ENCODE measurements at regions of chr1 and their contacts with region 1.

Region 1: GRCh38 chr1:11012250-11013171 is at the start of gene TARDBP:
- DNase-seq: peak; percentile 82 to 95 (median 90)
- ATAC-seq: peak; percentile 87
- H3K4me3 ChIP-seq: peak within 1 kb of the TSS; percentile 78 to 94
- H3K4me3 Mint-ChIP-seq: peak within 1 kb of the TSS; percentile 92
- H3K27ac ChIP-seq: peak within 1 kb of the TSS; percentile 95 to 97
- H3K27ac Mint-ChIP-seq: peak within 1 kb of the TSS; percentile 97
- H3K4me1 ChIP-seq: peaks cover 38% of the 10 kb centered on the region
- H3K4me1 Mint-ChIP-seq: peaks cover 36% of the 10 kb centered on the region
- H3K27me3 ChIP-seq: no peaks in the 10 kb centered on the region
- H3K27me3 Mint-ChIP-seq: no peaks in the 10 kb centered on the region
- CTCF ChIP-seq: no peak
- total RNA-seq, gene TARDBP: 125 to 131 TPM

Region 2: DNA sequence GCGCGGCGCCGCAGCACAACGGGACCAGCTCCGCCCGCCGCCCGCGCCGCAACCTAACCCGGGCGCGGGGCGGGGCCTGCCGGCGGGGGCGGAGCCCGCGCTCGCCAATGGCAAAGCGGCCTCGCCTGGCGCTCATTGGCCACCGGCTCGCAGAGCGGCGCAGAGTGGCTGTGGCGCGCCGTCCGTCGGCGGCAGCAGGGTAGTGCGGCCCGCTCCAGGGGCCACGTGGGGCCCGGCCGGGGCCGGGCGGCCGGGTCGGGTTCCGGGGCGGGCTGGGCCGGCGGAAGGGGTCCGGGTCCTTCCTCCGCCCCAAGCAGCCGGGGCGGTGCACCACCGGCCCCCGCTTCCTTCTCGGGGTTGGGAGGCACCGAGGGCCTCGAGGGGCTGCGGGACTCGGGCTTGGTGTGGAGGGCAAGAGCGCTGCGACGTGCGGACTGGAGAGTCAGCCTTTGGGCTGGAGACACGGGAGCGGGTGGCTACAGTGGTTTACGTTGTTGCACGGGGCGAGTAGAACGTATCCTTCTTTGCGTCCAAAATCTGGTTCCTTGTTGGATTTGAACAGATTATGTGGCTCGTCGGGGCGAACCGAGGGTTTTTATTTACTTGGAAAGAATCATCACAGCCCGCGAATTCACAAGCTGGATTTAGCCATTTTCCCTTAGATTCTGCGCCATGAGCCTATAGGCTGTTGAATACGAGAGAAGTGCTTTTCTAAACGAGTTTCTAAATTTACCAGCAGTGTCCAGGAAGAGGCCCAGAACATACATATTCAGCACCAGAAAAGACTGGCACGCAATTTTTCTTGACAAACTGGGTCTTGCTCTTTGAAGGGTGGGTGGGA is 47.7 kb after region 1 on chr1 and contains the start of gene SRM:
- CTCF ChIA-PET with region 1: no interaction called
- POLR2A ChIA-PET with region 1: interaction called, 10 read pairs
- intact Hi-C with region 1: loop called (anchors 1 kb)
- DNase-seq: peak; percentile 80 to 95 (median 89)
- ATAC-seq: peak; percentile 94
- H3K4me3 ChIP-seq: peak within 1 kb of the TSS; percentile 77 to 84
- H3K4me3 Mint-ChIP-seq: peak within 1 kb of the TSS; percentile 91
- H3K27ac ChIP-seq: peak within 1 kb of the TSS; percentile 69 to 82
- H3K27ac Mint-ChIP-seq: peak within 1 kb of the TSS; percentile 92
- H3K4me1 ChIP-seq: peaks cover 22% of the 10 kb centered on the region
- H3K4me1 Mint-ChIP-seq: peaks cover 32% of the 10 kb centered on the region
- H3K27me3 ChIP-seq: no peaks in the 10 kb centered on the region
- H3K27me3 Mint-ChIP-seq: no peaks in the 10 kb centered on the region
- CTCF ChIP-seq: peak; percentile 49
- total RNA-seq, gene SRM: 31.4 to 40.6 TPM

Region 3: GRCh38 chr1:11099310-11100149 is 87.0 kb after region 1 on chr1 and contains the start of gene EXOSC10:
- CTCF ChIA-PET with region 1: no interaction called
- POLR2A ChIA-PET with region 1: interaction called, 3 read pairs
- intact Hi-C with region 1: loop called (anchors 1 kb)
- DNase-seq: peak; percentile 88 to 97 (median 95)
- ATAC-seq: peak; percentile 97
- H3K4me3 ChIP-seq: peak within 1 kb of the TSS; percentile 70 to 86
- H3K4me3 Mint-ChIP-seq: peak within 1 kb of the TSS; percentile 87
- H3K27ac ChIP-seq: peak within 1 kb of the TSS; percentile 60 to 84
- H3K27ac Mint-ChIP-seq: peak within 1 kb of the TSS; percentile 96
- H3K4me1 ChIP-seq: peaks cover 12% of the 10 kb centered on the region
- H3K4me1 Mint-ChIP-seq: peaks cover 17% of the 10 kb centered on the region
- H3K27me3 ChIP-seq: no peaks in the 10 kb centered on the region
- H3K27me3 Mint-ChIP-seq: no peaks in the 10 kb centered on the region
- CTCF ChIP-seq: no peak
- total RNA-seq, gene EXOSC10: 95.0 to 98.1 TPM

Region 4: DNA sequence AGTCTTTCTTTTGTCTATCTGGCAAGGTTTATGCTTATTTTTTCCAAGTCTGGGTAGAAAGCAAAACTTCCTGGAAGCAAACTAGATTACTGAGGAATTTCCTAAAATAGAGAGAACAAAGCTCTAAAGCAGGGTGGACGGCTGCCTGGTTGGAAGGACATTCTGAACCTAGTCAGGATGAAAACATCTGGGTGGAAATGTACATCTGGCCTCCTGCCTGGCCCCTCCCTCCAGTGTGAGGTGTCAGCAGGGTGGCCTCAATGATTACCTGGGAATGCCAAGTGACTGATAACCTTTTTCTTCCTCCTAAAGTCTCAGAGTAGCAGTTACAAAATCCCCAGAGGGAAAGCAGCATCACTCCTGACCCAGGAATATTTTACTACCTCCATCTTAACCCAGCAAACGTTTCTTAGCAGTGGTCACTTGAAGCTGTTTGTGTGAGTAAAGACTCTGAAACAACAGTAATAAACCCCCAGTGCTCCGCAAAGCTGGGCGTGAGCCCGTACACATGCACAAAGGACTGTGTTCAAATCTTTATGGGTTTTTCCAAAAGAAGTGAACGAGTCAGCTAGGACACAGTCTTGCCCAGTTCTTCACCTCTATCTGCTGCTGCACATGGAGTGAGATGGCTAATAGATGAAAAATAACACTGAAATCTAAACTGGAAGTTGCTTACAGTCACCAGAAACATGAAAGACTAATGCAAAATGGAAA is 195.5 kb after region 1 on chr1:
- CTCF ChIA-PET with region 1: no interaction called
- POLR2A ChIA-PET with region 1: no interaction called
- intact Hi-C with region 1: no loop called
- DNase-seq: no peak
- ATAC-seq: no peak
- H3K4me3 ChIP-seq: no peak overlapping the region
- H3K4me3 Mint-ChIP-seq: no peak overlapping the region
- H3K27ac ChIP-seq: no peak overlapping the region
- H3K27ac Mint-ChIP-seq: no peak overlapping the region
- H3K4me1 ChIP-seq: no peaks in the 10 kb centered on the region
- H3K4me1 Mint-ChIP-seq: no peaks in the 10 kb centered on the region
- H3K27me3 ChIP-seq: no peaks in the 10 kb centered on the region
- H3K27me3 Mint-ChIP-seq: no peaks in the 10 kb centered on the region
- CTCF ChIP-seq: no peak

Region 5: DNA sequence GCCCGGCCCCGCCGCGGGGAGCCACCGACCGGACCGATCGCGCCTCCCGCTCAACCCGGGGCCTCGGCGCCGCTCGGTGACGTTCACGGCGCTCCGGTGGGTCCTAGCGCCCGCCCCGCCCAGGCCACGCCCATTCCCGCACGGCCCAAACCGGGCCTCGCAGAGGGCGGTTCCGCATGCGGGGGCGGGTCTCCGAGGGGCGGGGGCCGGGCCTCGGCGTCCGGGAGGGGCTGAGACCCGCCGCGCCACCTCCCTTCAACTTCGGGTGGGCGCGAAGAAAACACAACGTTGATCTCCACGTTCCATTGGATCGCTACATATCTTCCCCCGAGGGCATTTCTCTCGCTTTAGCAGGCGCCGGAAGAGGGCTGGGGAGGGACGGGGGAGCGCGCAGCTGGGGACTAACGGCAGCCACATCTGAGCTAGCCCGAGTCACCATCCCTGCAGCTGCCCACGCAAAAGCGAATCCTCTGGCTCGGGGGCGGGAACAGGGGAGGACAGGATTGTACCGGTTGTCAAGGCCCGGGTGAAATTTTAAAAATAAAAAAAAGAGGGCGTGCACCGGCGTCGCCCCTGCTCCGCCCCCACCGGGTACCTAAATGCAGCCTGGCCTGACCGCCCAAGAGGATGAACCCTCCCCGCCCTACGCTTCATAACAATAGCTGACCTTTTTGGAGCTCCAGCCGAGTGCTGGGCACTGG is 668.7 kb after region 1 on chr1 and contains the start of gene MAD2L2:
- CTCF ChIA-PET with region 1: no interaction called
- POLR2A ChIA-PET with region 1: no interaction called
- intact Hi-C with region 1: loop called in 1 of 2 experiments (anchors 1 kb)
- DNase-seq: peak; percentile 75 to 93 (median 91)
- ATAC-seq: peak; percentile 91
- H3K4me3 ChIP-seq: peak within 1 kb of the TSS; percentile 91 to 95
- H3K4me3 Mint-ChIP-seq: peak within 1 kb of the TSS; percentile 89
- H3K27ac ChIP-seq: peak within 1 kb of the TSS; percentile 54 to 69
- H3K27ac Mint-ChIP-seq: peak within 1 kb of the TSS; percentile 91
- H3K4me1 ChIP-seq: peaks cover 14% of the 10 kb centered on the region
- H3K4me1 Mint-ChIP-seq: peaks cover 18% of the 10 kb centered on the region
- H3K27me3 ChIP-seq: peaks cover 0 to 2% of the 10 kb centered on the region in 2 experiments
- H3K27me3 Mint-ChIP-seq: peaks cover 4% of the 10 kb centered on the region
- CTCF ChIP-seq: no peak
- total RNA-seq, gene MAD2L2: 28.7 to 29.4 TPM

Measured in CD8-positive, alpha-beta T cell (primary cell).